Activated CD4-positive, alpha-beta T cell treated with anti-CD3 and anti-CD28 coated beads for 36 hours (primary cell): ENCODE measurements at regions of chr9 and their contacts with region 1.

Region 1: GRCh38 chr9:113410207-113410864 is at the starts of genes C9orf43 and POLE3:
- DNase-seq: peak; percentile 98
- ATAC-seq: peak; percentile 93
- H3K4me3 Mint-ChIP-seq: peak within 1 kb of the TSS; percentile 98
- H3K27ac Mint-ChIP-seq: peak within 1 kb of the TSS; percentile 100
- H3K4me1 Mint-ChIP-seq: peaks cover 36% of the 10 kb centered on the region
- H3K27me3 Mint-ChIP-seq: no peaks in the 10 kb centered on the region
- total RNA-seq, gene C9orf43: 0.91 to 1.1 TPM
- total RNA-seq, gene POLE3: 53.3 to 57.4 TPM

Region 2: DNA sequence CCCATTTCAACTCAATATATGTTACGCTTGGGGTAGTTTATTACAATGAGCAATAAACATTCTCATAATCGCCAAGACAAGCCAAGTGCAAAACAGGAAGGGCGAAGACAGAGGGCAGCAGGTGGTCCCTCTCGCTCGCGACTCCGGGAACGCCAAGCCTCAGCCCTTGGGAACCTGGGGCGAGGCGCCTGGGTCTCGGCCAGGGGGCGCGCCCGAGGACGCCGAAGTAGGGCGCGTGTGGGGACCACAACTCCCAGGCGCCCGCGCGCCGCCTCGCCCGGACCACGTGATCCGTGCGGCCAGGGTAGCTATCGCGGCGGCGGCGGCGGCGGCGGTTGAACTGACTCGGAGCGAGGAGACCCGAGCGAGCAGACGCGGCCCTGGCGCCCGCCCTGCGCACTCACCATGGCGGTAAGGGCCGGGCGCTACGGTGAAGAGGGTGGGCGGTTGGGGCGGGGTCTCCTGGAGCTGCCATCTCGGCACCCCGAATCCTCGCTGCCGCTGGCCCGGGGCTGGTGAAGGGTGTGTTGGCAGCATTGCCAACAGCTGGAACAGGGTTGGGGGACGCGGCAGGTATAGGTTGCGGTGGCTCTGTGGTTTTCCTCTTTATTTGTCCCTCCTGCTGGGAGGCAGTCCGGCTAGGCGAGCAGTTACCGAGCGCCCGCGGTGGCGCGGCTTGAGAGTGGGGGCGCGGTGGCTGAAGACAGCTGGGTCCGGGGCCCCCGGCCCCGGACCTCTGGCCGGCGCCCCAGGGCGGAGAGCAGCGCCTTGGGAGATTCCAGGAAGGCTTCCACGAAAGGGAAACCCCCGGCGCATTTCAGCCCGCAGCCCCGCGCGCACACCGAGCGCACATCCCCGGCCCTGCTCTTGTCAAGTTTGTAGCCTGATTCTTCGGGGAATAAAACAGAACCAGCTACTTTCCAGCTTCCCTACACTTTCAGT is 259.4 kb before region 1 on chr9 and contains the start of gene SLC31A2:
- CTCF ChIA-PET with region 1: no interaction called
- POLR2A ChIA-PET with region 1: no interaction called
- intact Hi-C with region 1: loop called in 1 of 2 experiments (anchors 1 kb)
- DNase-seq: peak; percentile 95
- ATAC-seq: peak; percentile 97
- H3K4me3 Mint-ChIP-seq: peak within 1 kb of the TSS; percentile 73
- H3K27ac Mint-ChIP-seq: peak within 1 kb of the TSS; percentile 51
- H3K4me1 Mint-ChIP-seq: peaks cover 29% of the 10 kb centered on the region
- H3K27me3 Mint-ChIP-seq: peaks cover 2% of the 10 kb centered on the region
- total RNA-seq, gene SLC31A2: 2.7 to 3.2 TPM

Region 3: GRCh38 chr9:113309204-113309813 is 101.0 kb before region 1 on chr9:
- CTCF ChIA-PET with region 1: no interaction called
- POLR2A ChIA-PET with region 1: no interaction called
- intact Hi-C with region 1: loop called (anchors 1 kb)
- DNase-seq: peak; percentile 42
- ATAC-seq: peak; percentile 65
- H3K4me3 Mint-ChIP-seq: no peak overlapping the region
- H3K27ac Mint-ChIP-seq: no peak overlapping the region
- H3K4me1 Mint-ChIP-seq: no peaks in the 10 kb centered on the region
- H3K27me3 Mint-ChIP-seq: no peaks in the 10 kb centered on the region

Region 4: DNA sequence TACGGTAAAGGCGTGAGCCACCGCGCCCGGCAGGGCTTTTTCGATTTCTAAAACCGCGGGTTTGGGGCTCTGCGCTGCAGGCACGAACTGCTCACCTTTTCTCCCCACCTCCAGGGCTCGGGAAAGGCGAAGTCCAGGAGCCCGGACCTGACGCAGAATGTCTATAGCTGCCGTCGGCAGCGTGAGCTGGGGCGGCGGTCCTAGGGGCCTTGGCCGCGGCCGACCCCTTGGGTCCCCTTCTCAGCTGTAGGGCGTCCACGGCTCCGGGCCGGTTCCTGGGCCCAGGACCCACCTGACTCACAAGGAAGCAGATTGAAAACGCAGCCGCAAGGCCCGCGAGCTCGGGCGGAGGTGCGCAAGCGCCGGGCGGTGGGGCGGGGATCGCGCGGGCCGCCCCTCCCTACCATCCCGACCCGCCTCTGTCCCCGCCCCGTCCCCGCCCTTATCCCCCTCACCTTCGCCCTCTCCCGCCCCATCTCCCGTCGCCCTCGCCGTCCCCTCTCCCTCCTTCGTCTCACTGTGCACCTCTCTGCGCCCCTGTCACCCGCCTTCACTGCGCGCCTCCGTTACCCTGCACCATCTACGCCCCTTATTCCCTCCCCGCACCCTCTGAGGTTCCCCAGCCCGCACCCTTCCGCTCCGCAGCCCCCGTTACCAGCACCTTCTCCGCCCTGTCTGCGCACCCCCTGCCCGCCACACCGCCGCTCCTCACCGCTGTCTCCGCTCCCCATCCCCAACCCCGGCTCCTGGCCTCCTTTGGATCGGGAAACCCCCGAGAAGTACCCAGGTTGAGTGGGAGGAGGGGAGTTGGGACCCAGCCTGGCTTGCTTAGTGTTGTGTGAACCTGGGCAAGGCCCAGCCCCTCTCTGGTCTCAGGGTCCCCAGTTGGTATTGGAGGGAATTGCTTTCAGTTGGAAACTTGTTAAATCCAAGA is 33.4 kb before region 1 on chr9 and contains the start of gene HDHD3:
- CTCF ChIA-PET with region 1: interaction called, 7 read pairs
- POLR2A ChIA-PET with region 1: no interaction called
- intact Hi-C with region 1: loop called (anchors 1 kb)
- DNase-seq: peak; percentile 90
- ATAC-seq: peak; percentile 89
- H3K4me3 Mint-ChIP-seq: peak within 1 kb of the TSS; percentile 88
- H3K27ac Mint-ChIP-seq: peak within 1 kb of the TSS; percentile 89
- H3K4me1 Mint-ChIP-seq: peaks cover 17% of the 10 kb centered on the region
- H3K27me3 Mint-ChIP-seq: no peaks in the 10 kb centered on the region
- total RNA-seq, gene HDHD3: 12.7 to 16.5 TPM

Region 5: DNA sequence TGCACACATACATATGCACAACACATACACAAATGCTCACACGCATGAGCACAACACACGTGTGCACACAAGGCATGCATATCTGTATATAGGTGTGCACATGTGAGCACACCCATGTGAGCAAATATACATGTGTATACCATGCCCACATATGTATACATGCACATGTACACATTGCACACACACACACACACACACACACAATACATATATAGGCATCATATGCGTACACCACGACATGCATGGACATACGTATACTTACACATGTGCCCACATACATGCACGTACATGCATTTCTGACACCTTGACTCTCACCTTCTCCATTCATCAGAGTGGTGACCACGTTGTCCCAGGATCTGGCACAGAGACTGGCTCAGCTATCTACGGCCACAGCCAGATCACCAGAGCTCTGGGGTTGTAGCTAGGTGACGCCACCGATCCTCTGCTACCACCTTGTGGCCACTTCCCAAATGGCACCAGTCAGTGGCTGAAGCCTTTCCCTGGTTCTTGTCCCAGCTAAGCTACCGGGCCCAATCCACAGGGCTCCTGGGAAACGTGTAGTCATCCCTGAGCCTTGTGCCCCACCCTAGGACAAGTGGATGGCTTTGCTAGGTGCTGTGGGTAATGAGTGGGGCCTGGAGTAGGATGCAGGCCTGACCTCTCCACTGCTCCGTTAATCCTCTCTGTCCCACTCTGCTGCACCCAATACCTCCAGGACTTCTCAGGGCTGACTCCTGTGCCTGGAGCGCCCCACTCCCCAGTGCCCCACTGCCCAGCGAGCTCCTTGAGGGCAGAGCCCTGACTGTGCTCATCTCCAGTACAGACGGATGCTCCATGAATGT is 247.6 kb after region 1 on chr9:
- CTCF ChIA-PET with region 1: interaction called, 8 read pairs
- POLR2A ChIA-PET with region 1: no interaction called
- intact Hi-C with region 1: loop called in 1 of 2 experiments (anchors 1 kb)
- DNase-seq: peak; percentile 89
- ATAC-seq: peak; percentile 95
- H3K4me3 Mint-ChIP-seq: no peak overlapping the region
- H3K27ac Mint-ChIP-seq: no peak overlapping the region
- H3K4me1 Mint-ChIP-seq: peaks cover 7% of the 10 kb centered on the region
- H3K27me3 Mint-ChIP-seq: peaks cover 20% of the 10 kb centered on the region

Region 6: DNA sequence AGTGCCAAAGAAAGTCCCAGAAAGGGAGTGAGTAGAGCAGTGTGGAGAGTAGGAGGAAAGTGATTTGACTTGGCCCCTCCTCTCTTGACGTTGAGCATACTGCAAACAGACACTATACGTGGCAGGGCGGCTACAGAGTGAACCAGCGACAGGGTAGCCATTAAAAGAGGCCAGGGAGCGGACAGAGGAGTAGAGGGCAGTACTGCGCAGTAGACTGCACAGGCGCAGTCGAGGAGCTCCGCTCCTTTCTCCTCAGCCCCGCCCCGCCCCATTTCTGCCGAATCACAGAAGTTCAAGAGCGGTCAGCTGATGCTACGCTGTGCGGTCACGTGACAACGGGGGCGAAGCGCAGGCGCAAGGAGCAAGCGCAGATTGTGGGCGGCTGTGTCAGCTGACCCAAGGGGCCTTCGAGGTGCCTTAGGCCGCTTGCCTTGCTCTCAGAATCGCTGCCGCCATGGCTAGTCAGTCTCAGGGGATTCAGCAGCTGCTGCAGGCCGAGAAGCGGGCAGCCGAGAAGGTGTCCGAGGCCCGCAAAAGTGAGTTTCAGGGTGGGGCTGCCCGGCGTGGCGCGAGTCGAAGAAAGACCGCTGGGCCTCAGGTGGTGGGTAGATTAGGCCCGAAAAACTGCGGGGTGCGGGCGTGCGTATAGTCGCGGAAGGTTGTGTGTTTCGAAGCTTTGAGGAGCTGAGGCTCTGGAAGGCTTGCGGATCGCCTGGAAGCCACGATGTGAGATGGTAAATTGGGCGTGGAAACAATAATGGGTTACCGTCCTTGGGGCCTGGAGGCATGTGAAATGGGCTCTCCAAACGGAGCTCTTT is 1177.3 kb after region 1 on chr9 and contains the start of gene ATP6V1G1:
- CTCF ChIA-PET with region 1: no interaction called
- POLR2A ChIA-PET with region 1: no interaction called
- intact Hi-C with region 1: loop called in 1 of 2 experiments (anchors 10 kb)
- DNase-seq: peak; percentile 100
- ATAC-seq: peak; percentile 96
- H3K4me3 Mint-ChIP-seq: peak within 1 kb of the TSS; percentile 99
- H3K27ac Mint-ChIP-seq: peak within 1 kb of the TSS; percentile 100
- H3K4me1 Mint-ChIP-seq: peaks cover 44% of the 10 kb centered on the region
- H3K27me3 Mint-ChIP-seq: no peaks in the 10 kb centered on the region
- total RNA-seq, gene ATP6V1G1: 33.8 to 37.7 TPM